ENCODE measurements at regions of chr3 and their contacts with region 1.

Region 1: DNA sequence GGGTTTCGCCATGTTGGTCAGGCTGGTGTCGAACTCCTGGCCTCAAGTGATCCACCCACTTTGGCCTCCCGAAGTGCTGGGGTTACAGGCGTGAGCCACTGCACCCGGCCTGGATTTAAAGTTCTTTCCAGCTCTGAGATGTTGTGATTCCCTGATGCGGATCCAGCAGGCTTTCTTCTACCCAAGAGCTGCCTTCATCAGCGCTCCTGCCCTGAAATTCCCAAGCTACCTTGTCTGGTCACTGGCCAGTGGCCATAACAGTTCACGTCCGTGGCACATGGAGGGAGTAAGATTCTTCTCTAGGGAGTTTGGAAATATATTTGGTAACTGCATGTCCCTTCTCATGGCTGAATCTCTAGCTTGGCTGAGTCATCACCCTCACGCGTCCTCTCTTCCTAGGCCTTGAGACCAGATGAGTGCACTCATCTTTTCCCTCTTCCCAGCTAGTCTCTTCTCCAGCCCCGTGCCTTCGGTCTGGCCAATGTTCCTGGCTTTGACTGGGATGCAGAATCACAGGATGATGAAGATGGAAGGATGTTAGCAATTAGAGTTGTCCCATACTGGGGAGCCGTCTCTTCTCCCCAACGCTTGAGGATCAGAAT is 29.8 kb upstream of the APOD start:
- DNase-seq: no peak
- ATAC-seq: no peak
- H3K4me3 Mint-ChIP-seq: no peak overlapping the region
- H3K27ac Mint-ChIP-seq: peak overlapping the region; percentile 68
- H3K4me1 Mint-ChIP-seq: peaks cover 32% of the 10 kb centered on the region
- H3K27me3 Mint-ChIP-seq: no peaks in the 10 kb centered on the region
- CTCF ChIP-seq: no peak

Region 2: DNA sequence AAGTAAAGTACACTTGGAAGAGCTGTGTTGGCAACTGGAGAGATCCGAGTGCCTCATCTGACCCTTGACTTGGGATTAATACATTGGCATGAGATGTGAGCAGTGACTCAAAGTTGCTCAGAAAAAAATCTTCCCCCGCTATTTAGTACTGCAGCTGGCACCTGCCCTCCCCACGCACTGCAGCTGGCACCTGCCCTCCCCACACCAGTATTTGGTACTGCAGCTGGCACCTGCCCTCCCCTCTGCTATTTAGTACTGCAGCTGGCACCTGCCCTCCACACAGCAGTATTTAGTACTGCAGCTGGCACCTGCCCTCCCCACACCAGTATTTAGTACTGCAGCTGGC is 103.3 kb after region 1 on chr3:
- CTCF ChIA-PET with region 1: no interaction called
- POLR2A ChIA-PET with region 1: interaction called, 5 read pairs
- intact Hi-C with region 1: loop called (anchors 2 kb)
- DNase-seq: no peak
- ATAC-seq: no peak
- H3K4me3 Mint-ChIP-seq: no peak overlapping the region
- H3K27ac Mint-ChIP-seq: no peak overlapping the region
- H3K4me1 Mint-ChIP-seq: peaks cover 5% of the 10 kb centered on the region
- H3K27me3 Mint-ChIP-seq: peaks cover 1% of the 10 kb centered on the region
- CTCF ChIP-seq: no peak

Measured in activated CD8-positive, alpha-beta T cell treated with anti-CD3 and anti-CD28 coated beads for 36 hours (primary cell).